K562 (cell line): ENCODE measurements at regions of chr2 and their contacts with region 1.

Region 1: DNA sequence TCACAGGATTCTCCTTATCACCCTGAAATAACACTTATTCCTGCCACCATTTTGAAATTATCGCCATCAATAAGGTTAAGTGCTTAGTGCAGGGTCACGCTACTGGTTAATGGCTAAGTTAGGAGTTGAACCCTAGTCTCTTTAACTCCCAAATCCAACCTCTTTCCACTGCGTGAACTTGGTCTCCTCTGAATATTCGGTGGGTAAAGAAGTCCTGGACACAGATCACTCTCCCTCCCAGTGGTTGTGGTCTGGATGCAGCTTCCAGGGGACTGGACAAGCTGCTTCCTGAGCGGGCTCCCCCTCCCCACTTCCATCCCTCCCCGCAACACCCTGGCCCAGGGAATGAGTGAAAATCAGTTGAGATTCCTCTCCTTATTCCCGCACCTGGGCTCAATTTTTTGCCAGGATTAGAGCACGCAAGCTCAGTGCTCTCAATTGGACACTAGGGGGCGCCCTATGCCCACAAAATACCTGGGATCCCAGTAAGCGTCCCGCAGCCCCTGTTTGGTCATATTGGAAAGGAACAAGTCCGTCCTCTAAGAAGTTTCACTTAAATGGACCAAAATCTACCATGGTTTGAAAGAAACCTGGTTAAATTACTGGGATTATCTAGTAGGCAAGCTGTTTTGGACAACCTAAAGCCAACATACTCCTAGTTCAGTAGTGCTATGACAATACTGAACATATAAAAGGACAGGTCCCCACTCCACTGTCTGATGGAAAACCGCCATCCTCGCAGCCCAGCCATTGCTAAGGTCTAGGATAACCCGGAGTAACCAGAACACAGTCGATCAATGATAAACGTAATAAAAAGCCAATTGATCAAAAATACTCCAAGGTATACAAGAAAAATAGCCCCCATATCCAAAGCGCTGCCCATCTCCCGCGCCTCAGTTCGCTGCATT is 40.4 kb downstream of the DHRS9 start:
- DNase-seq: peak; percentile 90 to 92 (median 92)
- ATAC-seq: peak; percentile 96
- H3K4me3 ChIP-seq: no peak overlapping the region
- H3K27ac ChIP-seq: no peak overlapping the region
- H3K4me1 ChIP-seq: peaks cover 0 to 17% of the 10 kb centered on the region in 2 experiments; a peak in 4 of 5 replicates
- H3K27me3 ChIP-seq: no peaks in the 10 kb centered on the region
- CTCF ChIP-seq: peak; percentile 90 to 95 (median 95)
- EP300 ChIP-seq: no peak
- POLR2A ChIP-seq: no peak
- RAD21 ChIP-seq: peak; percentile 98

Region 2: GRCh38 chr2:168392024-168392423 is 717.7 kb before region 1 on chr2:
- CTCF ChIA-PET with region 1: no interaction called
- POLR2A ChIA-PET with region 1: no interaction called
- in situ Hi-C with region 1: no loop called
- intact Hi-C with region 1: no loop called
- DNase-seq: no peak
- ATAC-seq: no peak
- H3K4me3 ChIP-seq: no peak overlapping the region
- H3K27ac ChIP-seq: no peak overlapping the region
- H3K4me1 ChIP-seq: no peaks in the 10 kb centered on the region
- H3K27me3 ChIP-seq: no peaks in the 10 kb centered on the region
- CTCF ChIP-seq: no peak
- EP300 ChIP-seq: no peak
- POLR2A ChIP-seq: no peak
- RAD21 ChIP-seq: no peak

Region 3: DNA sequence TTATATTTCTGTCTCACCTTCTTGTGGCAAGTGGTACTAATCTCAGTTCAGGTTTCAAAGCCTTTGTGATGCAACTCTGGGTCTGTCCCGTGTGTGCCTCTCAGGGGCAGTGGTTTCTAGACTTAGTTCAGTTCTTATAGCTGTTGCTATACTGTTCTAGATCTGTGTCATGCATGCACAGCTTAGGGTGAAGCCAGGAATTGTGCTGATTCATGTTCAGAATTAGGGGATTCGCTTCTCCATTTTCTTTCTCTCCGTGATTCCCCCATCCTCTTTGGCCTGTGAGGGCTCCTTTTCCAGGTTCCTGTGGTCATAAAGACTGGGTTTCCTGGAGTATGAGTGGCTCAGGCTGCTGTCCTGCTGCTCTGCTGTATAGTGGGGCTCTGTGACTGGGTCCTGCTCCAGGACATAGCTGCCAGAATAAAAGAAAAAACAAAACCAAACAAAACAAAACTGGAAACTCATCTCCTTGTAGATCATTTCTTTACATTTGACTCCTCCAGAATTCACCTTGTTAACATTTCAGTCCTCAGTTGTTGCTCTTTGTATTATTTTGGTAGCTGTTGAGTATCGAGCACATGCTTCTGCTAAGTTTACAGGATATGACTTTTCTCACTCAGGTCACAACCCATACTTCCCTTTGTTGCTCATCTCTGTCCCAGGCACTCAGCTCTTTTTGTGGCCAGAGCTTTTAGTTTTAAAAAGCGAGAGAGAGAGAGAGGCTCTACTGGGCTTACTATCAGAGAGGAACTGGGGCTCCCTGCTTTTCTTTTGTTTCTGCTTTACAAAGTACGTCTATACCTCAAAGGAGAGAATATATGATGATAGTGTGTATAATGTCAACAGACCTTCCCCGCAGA is 619.5 kb before region 1 on chr2:
- CTCF ChIA-PET with region 1: no interaction called
- POLR2A ChIA-PET with region 1: no interaction called
- in situ Hi-C with region 1: no loop called
- intact Hi-C with region 1: no loop called
- DNase-seq: peak in 2 of 4 experiments; percentile 67 to 74
- ATAC-seq: peak; percentile 93
- H3K4me3 ChIP-seq: peak overlapping the region; percentile 17
- H3K27ac ChIP-seq: peak overlapping the region; percentile 76
- H3K4me1 ChIP-seq: peaks cover 0 to 17% of the 10 kb centered on the region in 2 experiments; a peak in 3 of 5 replicates
- H3K27me3 ChIP-seq: no peaks in the 10 kb centered on the region
- CTCF ChIP-seq: no peak
- EP300 ChIP-seq: peak; percentile 32; the same call in 1 of the 2 replicates
- POLR2A ChIP-seq: peak; percentile 48; the same call in 1 of the 2 replicates
- RAD21 ChIP-seq: no peak

Region 4: DNA sequence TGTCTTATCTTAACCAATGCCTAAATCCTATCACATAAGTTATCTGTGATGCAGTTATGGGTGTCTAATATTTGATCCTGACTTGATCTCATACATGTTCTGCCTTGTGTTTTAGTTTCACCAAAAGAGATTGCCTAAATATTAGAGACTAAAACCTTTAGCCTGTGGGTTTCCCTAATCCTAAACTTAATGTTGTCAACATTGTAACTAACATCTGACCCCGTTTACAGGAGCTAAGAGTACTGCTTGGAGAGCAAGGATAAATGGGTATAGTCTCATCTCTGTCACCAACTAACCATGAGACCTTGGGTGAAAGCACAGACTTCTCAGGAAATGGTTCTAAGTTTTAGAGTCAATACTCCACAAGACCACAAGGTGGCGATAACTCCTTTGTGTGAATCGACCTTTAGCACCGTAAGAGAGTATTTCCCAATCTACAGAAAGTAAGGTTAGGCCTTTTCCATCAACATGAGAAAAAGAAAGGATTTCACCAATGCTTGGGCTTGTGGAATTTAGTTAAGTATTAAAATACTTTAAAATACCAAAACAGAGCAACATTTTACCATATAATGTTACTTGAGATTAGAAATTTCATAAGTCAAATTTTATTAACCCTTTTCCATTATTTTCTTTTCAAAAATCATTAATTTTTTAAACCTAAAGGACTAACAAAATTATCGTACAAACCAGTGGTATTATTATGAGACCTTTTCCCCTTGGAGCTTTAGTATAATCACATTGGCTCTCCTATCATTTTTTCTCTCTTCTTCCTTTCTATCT is 148.1 kb before region 1 on chr2:
- CTCF ChIA-PET with region 1: no interaction called
- POLR2A ChIA-PET with region 1: no interaction called
- in situ Hi-C with region 1: no loop called
- intact Hi-C with region 1: loop called (anchors 1 kb)
- DNase-seq: peak; percentile 65 to 89 (median 72)
- ATAC-seq: peak; percentile 96
- H3K4me3 ChIP-seq: no peak overlapping the region
- H3K27ac ChIP-seq: no peak overlapping the region
- H3K4me1 ChIP-seq: no peaks in the 10 kb centered on the region; a peak in 1 of 5 replicates
- H3K27me3 ChIP-seq: no peaks in the 10 kb centered on the region
- CTCF ChIP-seq: peak; percentile 84 to 95 (median 87)
- EP300 ChIP-seq: peak; percentile 28; the same call in 1 of the 2 replicates
- POLR2A ChIP-seq: no peak
- RAD21 ChIP-seq: peak; percentile 99

Region 5: GRCh38 chr2:169141713-169142352 is 32.1 kb after region 1 on chr2:
- CTCF ChIA-PET with region 1: interaction called, 20 read pairs
- POLR2A ChIA-PET with region 1: interaction called, 3 read pairs
- in situ Hi-C with region 1: no loop called
- intact Hi-C with region 1: loop called (anchors 1 kb)
- DNase-seq: peak; percentile 73 to 87 (median 78)
- ATAC-seq: peak; percentile 88
- H3K4me3 ChIP-seq: no peak overlapping the region
- H3K27ac ChIP-seq: no peak overlapping the region
- H3K4me1 ChIP-seq: peaks cover 3 to 12% of the 10 kb centered on the region in 2 experiments; a peak in 3 of 5 replicates
- H3K27me3 ChIP-seq: no peaks in the 10 kb centered on the region
- CTCF ChIP-seq: peak; percentile 86 to 95 (median 88)
- EP300 ChIP-seq: no peak
- POLR2A ChIP-seq: no peak
- RAD21 ChIP-seq: peak; percentile 76 to 87

Region 6: DNA sequence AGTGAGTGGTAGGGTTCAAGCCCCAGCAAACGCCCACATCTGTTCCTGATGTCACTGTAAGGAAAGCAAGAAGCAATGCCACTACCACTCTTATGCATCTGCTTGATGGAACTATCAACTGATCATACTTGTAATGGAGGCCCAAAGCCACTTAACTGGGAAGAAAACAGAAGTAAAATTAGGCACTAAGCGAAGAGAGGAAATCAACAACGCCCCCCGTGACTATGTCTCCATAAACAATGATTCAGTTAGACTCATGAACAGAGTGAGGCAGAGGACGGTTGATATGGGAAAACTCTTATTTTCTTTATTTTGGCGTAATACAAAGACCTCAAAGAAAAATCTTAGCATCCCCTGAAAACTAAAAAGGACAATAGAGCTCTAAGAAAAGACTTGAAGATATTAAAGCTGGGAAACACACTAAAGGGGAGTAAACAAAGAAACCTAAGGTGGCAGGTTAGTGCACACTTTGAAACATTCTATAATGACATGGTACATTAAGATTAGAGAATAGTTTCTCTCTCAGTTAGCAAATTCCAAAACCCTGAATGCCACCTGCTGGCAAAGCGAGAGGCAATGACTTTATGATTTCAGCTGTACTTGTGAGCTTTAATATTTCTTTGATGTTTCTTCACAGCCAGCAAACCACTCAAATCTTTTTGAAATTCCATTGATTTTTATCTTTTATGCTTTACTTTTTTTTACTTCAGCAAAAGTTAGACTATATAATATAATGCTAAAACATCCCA is 166.1 kb after region 1 on chr2:
- CTCF ChIA-PET with region 1: interaction called, 10 read pairs
- POLR2A ChIA-PET with region 1: no interaction called
- in situ Hi-C with region 1: no loop called
- intact Hi-C with region 1: loop called (anchors 2 kb)
- DNase-seq: peak in 1 of 4 experiments; percentile 28
- ATAC-seq: no peak
- H3K4me3 ChIP-seq: no peak overlapping the region
- H3K27ac ChIP-seq: no peak overlapping the region
- H3K4me1 ChIP-seq: no peaks in the 10 kb centered on the region
- H3K27me3 ChIP-seq: peaks cover 5 to 17% of the 10 kb centered on the region in 2 experiments
- CTCF ChIP-seq: peak; percentile 34 to 67 (median 46); a peak in 4 of 6 replicates
- EP300 ChIP-seq: no peak
- POLR2A ChIP-seq: no peak
- RAD21 ChIP-seq: peak; percentile 69 to 76

Region 7: GRCh38 chr2:169528271-169528701 is 418.5 kb after region 1 on chr2:
- CTCF ChIA-PET with region 1: no interaction called
- POLR2A ChIA-PET with region 1: no interaction called
- in situ Hi-C with region 1: no loop called
- intact Hi-C with region 1: loop called (anchors 10 kb)
- DNase-seq: peak; percentile 71 to 88 (median 81)
- ATAC-seq: peak; percentile 99
- H3K4me3 ChIP-seq: no peak overlapping the region
- H3K27ac ChIP-seq: no peak overlapping the region
- H3K4me1 ChIP-seq: no peaks in the 10 kb centered on the region
- H3K27me3 ChIP-seq: no peaks in the 10 kb centered on the region
- CTCF ChIP-seq: peak; percentile 88 to 94 (median 91)
- EP300 ChIP-seq: no peak
- POLR2A ChIP-seq: no peak
- RAD21 ChIP-seq: peak; percentile 74 to 92

Region 8: DNA sequence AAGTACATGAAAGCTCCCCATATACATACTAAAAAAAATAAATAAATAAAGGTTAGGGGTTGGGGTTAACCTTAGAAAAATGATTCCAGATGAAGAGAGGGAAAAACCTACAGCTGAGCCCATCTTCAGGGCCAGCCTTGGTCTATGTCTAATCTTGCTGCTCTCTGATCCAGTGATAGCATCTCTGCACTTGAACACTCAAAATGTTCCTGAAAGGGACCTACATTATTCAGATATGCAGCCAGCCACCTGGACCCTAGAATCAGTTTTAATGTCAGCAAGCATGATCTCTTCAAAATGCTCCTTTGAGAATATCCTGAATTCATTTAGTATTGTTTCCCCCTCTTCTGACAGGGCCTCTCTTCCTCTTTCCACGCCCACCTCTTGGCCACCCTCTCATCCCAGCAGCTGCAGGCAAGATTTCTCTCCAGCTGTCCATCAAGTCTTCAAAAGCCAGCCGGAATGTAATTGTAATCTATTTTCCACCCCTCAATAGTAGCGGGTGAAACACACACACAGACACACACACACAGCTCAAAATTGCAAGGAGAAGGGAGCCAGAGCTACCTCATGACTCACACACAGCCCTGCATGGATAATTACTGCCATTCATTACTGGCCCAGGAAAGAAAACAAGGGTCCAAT is 1203.7 kb after region 1 on chr2:
- CTCF ChIA-PET with region 1: no interaction called
- POLR2A ChIA-PET with region 1: no interaction called
- in situ Hi-C with region 1: no loop called
- intact Hi-C with region 1: no loop called
- DNase-seq: peak in 2 of 4 experiments; percentile 29 to 48
- ATAC-seq: peak; percentile 65
- H3K4me3 ChIP-seq: no peak overlapping the region
- H3K27ac ChIP-seq: no peak overlapping the region
- H3K4me1 ChIP-seq: peaks cover 4 to 32% of the 10 kb centered on the region in 2 experiments; a peak in 4 of 5 replicates
- H3K27me3 ChIP-seq: no peaks in the 10 kb centered on the region
- CTCF ChIP-seq: no peak
- EP300 ChIP-seq: no peak
- POLR2A ChIP-seq: no peak
- RAD21 ChIP-seq: no peak